Activated T-helper 2 cell treated with anti-CD3 and anti-CD28 coated beads, Interferon-gamma antibody, Interleukin-2, Interleukin-4, amounts not matched to agents 10 μg/mL and 5 μg/mL and 100 μg/mL, durations not matched to agents 14 hours and 24 hours and 36 hours (primary cell): ENCODE measurements at regions of chr12 and their contacts with region 1.

Region 1: GRCh38 chr12:95217377-95218149 is at the starts of genes FGD6 and VEZT:
- DNase-seq: peak; percentile 98
- H3K4me3 Mint-ChIP-seq: peak within 1 kb of the TSS; percentile 98
- H3K27ac Mint-ChIP-seq: peak within 1 kb of the TSS; percentile 99
- H3K4me1 Mint-ChIP-seq: peaks cover 26% of the 10 kb centered on the region
- H3K27me3 Mint-ChIP-seq: peaks cover 13% of the 10 kb centered on the region
- total RNA-seq, gene FGD6: 0.69 and 1.1 TPM in 2 replicates
- total RNA-seq, gene VEZT: 62.6 and 63.1 TPM in 2 replicates

Region 2: DNA sequence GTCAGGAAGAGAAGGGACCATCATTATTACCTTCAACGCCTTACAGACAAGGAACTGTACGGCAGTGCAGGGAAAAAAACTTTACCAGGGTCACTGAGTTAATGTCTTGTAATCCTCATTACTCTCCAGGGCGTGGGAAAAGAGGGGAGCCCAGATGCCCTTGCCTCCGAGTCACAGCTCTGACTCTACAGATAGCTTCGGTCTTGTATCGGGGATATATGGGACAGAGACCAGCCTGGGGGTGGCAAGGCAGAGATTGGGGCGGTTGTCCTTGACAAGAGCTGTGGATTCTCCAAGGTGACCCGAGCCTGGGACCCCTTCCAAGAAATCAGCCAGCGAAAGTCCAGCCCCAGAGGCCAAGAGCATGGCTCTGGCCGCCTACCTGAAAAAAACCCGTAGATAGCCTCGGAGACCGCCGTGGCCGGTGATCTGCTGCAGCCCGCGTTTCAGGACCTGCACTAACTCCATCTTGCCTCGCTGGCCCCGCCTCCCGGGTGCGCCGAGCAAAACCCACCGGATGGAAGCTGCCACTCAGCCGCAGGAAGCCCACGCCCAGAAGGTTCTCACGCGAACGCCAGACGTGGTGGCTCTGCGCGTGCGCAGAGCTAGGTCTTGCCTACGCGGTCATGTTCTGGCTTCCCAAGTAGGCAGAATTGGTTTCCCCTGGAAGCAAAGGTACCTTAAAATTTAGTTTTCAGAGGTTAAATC is 214.2 kb before region 1 on chr12 and contains the start of gene NDUFA12:
- intact Hi-C with region 1: loop called (anchors 2 kb)
- DNase-seq: peak; percentile 92
- H3K4me3 Mint-ChIP-seq: peak within 1 kb of the TSS; percentile 90
- H3K27ac Mint-ChIP-seq: peak within 1 kb of the TSS; percentile 84
- H3K4me1 Mint-ChIP-seq: peaks cover 27% of the 10 kb centered on the region
- H3K27me3 Mint-ChIP-seq: no peaks in the 10 kb centered on the region
- total RNA-seq, gene NDUFA12: 117 and 118 TPM in 2 replicates

Region 3: GRCh38 chr12:95117178-95117599 is 100.4 kb before region 1 on chr12:
- intact Hi-C with region 1: loop called (anchors 1 kb)
- DNase-seq: peak; percentile 26
- H3K4me3 Mint-ChIP-seq: no peak overlapping the region
- H3K27ac Mint-ChIP-seq: no peak overlapping the region
- H3K4me1 Mint-ChIP-seq: peaks cover 8% of the 10 kb centered on the region
- H3K27me3 Mint-ChIP-seq: peaks cover 2% of the 10 kb centered on the region

Region 4: DNA sequence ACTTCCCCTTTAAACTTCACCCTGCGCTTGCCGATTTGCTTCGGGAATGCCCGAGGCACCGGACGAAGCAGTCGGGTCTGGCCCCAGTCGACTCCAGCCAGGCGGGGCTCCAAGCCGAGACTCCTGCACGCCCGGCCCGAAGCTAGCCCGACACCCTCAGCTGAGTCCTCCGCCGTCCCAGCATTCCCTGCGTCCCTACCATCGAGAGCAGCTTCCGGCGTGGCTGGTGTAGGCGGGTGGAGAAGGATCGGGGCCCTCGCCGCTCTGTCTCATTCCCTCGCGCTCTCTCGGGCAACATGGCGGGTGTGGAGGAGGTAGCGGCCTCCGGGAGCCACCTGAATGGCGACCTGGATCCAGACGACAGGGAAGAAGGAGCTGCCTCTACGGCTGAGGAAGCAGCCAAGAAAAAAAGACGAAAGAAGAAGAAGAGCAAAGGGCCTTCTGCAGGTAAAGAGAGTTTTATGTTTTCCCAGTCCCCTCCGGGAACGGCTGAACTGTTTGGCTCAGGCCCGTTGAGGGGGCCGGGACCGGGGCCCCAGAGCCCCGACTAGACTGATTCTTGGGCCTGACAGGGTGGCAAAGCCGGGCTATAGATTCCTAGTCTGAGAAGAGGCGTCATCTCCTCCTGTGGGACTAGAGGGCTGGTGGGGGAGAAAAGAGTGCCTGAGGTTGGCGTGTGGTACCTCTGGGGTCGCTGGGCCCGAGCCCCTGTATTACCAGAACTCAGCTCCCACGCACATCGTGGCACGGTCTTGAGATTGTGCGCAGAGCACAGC is 256.5 kb after region 1 on chr12 and contains the start of gene METAP2:
- intact Hi-C with region 1: loop called (anchors 1 kb)
- DNase-seq: peak; percentile 87
- H3K4me3 Mint-ChIP-seq: peak within 1 kb of the TSS; percentile 100
- H3K27ac Mint-ChIP-seq: peak within 1 kb of the TSS; percentile 99
- H3K4me1 Mint-ChIP-seq: peaks cover 29% of the 10 kb centered on the region
- H3K27me3 Mint-ChIP-seq: no peaks in the 10 kb centered on the region
- total RNA-seq, gene METAP2: 111 and 113 TPM in 2 replicates